Natural killer cell (primary cell): ENCODE measurements at regions of chr12 and their contacts with region 1.

Region 1: DNA sequence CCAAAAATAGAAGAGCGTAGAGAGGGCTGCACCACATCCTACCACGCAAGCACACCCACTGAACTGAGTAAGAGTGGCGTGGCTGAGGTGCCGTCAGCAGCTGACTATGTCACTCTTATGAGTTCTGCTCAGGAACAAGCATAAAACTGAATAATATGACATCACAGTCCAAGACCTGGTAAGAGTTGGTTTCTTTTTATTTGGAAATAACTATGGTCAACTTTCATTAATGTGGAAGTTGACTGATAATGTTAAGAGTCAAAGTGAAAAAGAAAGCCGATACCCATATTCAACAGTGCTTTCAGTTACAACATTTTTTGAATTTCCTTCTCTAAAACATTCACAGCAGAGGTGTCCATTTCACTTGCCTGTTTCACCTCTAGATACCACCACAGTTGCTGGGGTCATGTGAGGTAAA is 44.6 kb downstream of the GNS start:
- DNase-seq: peak; percentile 53 to 63
- ATAC-seq: peak; percentile 81 to 88 (median 82)
- H3K4me3 ChIP-seq: no peak overlapping the region
- H3K4me3 Mint-ChIP-seq: peak overlapping the region; percentile 78
- H3K27ac ChIP-seq: peak overlapping the region; percentile 91
- H3K27ac Mint-ChIP-seq: peak overlapping the region; percentile 96 to 97
- H3K4me1 ChIP-seq: peaks cover 41% of the 10 kb centered on the region
- H3K4me1 Mint-ChIP-seq: peaks cover 52 to 61% of the 10 kb centered on the region in 2 donors
- H3K27me3 ChIP-seq: no peaks in the 10 kb centered on the region
- H3K27me3 Mint-ChIP-seq: no peaks in the 10 kb centered on the region
- CTCF ChIP-seq: no peak

Region 2: GRCh38 chr12:64610149-64610678 is 104.3 kb before region 1 on chr12 and contains the start of gene RASSF3:
- intact Hi-C with region 1: loop called (anchors 2 kb)
- DNase-seq: peak; percentile 57 to 89
- ATAC-seq: peak; percentile 32 to 64 (median 50)
- H3K4me3 ChIP-seq: peak within 1 kb of the TSS; percentile 78
- H3K4me3 Mint-ChIP-seq: peak within 1 kb of the TSS; percentile 98
- H3K27ac ChIP-seq: peak within 1 kb of the TSS; percentile 79
- H3K27ac Mint-ChIP-seq: peak within 1 kb of the TSS; percentile 90 to 97
- H3K4me1 ChIP-seq: peaks cover 28% of the 10 kb centered on the region
- H3K4me1 Mint-ChIP-seq: peaks cover 39 to 47% of the 10 kb centered on the region in 2 donors
- H3K27me3 ChIP-seq: no peaks in the 10 kb centered on the region
- H3K27me3 Mint-ChIP-seq: no peaks in the 10 kb centered on the region
- CTCF ChIP-seq: no peak
- total RNA-seq, gene RASSF3: 63.4 to 105 (median 80.5) TPM

Region 3: DNA sequence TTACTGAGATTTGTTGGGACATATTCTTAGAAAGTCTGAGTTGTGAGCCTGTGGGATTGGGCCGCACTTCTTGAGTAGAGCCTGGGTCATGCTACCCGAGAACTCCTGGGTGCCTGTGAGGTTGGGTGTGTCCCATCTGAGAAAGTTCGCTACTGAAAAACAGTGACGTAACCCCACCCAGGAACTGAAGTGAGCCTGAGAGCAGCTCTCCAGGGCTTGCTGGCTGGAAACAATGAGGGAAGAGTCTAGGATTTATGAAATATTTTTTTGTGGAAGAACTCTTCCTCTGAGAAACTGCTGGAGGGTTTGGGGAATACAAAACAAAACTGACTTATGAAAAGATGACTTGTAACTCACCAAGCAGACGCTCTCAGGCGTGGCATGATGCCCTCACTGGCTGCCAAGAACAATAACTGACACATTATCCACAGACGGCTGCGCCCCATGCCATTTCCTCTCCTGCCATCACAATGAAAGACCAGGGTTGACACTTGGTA is 35.0 kb before region 1 on chr12:
- intact Hi-C with region 1: loop called (anchors 2 kb)
- DNase-seq: peak; percentile 65 to 89
- ATAC-seq: peak; percentile 71 to 86 (median 85)
- H3K4me3 ChIP-seq: peak overlapping the region; percentile 17
- H3K4me3 Mint-ChIP-seq: peak overlapping the region; percentile 74
- H3K27ac ChIP-seq: peak overlapping the region; percentile 96
- H3K27ac Mint-ChIP-seq: peak overlapping the region; percentile 91 to 93
- H3K4me1 ChIP-seq: peaks cover 94% of the 10 kb centered on the region
- H3K4me1 Mint-ChIP-seq: peaks cover 74 to 77% of the 10 kb centered on the region in 2 donors
- H3K27me3 ChIP-seq: no peaks in the 10 kb centered on the region
- H3K27me3 Mint-ChIP-seq: no peaks in the 10 kb centered on the region
- CTCF ChIP-seq: no peak

Region 4: DNA sequence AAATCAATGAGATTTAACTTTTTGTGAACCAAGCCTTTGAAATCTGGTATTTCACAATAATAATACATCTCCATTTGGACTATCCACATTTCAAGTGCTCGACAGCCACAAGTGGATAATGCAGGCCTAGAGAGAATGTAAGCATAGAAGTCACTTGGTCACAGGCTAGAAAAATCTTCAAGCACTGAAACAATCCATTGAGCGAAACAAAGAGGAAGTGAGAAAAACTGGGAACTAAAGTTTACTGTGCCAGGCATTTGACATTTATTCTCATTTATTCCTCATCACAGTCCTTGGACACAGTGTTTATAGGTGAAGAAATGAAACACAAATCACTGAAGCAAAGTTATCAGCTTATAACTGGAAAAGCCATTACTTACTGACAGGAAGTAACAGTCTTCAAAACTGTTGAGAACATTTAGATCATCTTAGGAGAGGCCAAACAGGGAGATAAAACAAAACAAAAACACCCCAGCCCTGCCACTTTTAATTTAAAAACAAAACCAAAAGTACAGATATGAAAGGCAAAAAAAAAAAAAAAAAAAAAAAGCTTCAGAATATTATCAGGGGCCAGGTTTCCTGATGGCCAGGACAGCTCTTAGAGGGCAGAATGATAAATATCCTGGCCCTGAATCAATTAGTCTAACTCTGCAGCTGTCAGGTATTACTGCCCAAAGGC is 15.5 kb after region 1 on chr12:
- intact Hi-C with region 1: loop called (anchors 1 kb)
- DNase-seq: peak in 1 of 2 donors; percentile 36
- ATAC-seq: peak; percentile 82 to 85 (median 83)
- H3K4me3 ChIP-seq: peak overlapping the region; percentile 6
- H3K4me3 Mint-ChIP-seq: peak overlapping the region; percentile 84
- H3K27ac ChIP-seq: peak overlapping the region; percentile 95
- H3K27ac Mint-ChIP-seq: peak overlapping the region; percentile 95 to 98
- H3K4me1 ChIP-seq: peaks cover 16% of the 10 kb centered on the region
- H3K4me1 Mint-ChIP-seq: peaks cover 26 to 27% of the 10 kb centered on the region in 2 donors
- H3K27me3 ChIP-seq: no peaks in the 10 kb centered on the region
- H3K27me3 Mint-ChIP-seq: no peaks in the 10 kb centered on the region
- CTCF ChIP-seq: no peak

Region 5: GRCh38 chr12:66309606-66310005 is 1595.0 kb after region 1 on chr12:
- intact Hi-C with region 1: no loop called
- DNase-seq: no peak
- ATAC-seq: no peak
- H3K4me3 ChIP-seq: no peak overlapping the region
- H3K4me3 Mint-ChIP-seq: peak overlapping the region; percentile 10
- H3K27ac ChIP-seq: no peak overlapping the region
- H3K27ac Mint-ChIP-seq: peak overlapping the region in 1 of 2 donors; percentile 70
- H3K4me1 ChIP-seq: peaks cover 8% of the 10 kb centered on the region
- H3K4me1 Mint-ChIP-seq: peaks cover 60 to 70% of the 10 kb centered on the region in 2 donors
- H3K27me3 ChIP-seq: no peaks in the 10 kb centered on the region
- H3K27me3 Mint-ChIP-seq: no peaks in the 10 kb centered on the region
- CTCF ChIP-seq: no peak